Activated CD4-positive, alpha-beta T cell treated with anti-CD3 and anti-CD28 coated beads for 36 hours (primary cell): ENCODE measurements at regions of chr5 and their contacts with region 1.

Region 1: DNA sequence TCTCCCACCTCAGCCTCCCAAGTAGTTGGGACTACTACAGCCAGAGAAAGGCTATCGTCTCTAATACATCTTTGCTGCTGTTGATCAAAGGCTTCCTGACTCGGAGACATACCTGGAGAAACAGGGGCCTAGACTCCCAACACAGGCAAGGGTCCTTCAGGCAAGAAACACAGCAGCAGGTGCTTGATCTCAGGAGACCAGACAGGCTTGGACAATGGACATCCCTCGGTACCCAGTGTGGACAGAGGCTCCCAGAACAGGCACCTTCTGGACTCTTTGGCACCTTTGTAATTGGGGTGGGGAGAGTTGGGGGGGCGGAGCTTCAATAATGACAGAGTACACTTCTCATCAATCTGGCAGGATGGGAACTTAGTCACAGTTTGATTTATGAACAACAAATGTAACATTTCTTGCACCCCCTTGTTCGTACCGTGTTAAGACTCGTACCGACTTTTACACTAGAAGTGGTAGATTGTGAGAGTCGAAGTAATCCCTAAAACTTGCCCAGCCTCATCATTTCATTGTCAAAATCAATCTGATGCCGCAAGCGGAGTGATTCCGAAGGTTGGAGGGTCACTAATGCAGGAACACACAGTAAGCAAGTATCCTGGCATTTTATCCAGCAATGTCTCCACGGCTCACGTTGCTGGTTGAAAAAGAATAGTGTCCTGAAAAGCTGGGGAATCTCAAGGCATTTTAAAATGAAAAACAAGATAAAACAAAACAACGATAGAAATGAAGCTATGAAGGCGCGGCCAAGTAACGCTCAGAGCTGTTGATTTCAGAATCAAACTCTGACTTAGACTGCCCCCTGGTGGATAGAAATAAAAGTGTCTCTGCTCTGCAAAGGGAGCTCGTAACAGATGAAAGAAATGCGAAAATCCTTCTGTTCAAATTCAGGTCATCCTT is 46.4 kb upstream of the STK32A start:
- DNase-seq: peak; percentile 56
- ATAC-seq: peak; percentile 73
- H3K4me3 Mint-ChIP-seq: no peak overlapping the region
- H3K27ac Mint-ChIP-seq: no peak overlapping the region
- H3K4me1 Mint-ChIP-seq: peaks cover 2% of the 10 kb centered on the region
- H3K27me3 Mint-ChIP-seq: peaks cover 8% of the 10 kb centered on the region

Region 2: DNA sequence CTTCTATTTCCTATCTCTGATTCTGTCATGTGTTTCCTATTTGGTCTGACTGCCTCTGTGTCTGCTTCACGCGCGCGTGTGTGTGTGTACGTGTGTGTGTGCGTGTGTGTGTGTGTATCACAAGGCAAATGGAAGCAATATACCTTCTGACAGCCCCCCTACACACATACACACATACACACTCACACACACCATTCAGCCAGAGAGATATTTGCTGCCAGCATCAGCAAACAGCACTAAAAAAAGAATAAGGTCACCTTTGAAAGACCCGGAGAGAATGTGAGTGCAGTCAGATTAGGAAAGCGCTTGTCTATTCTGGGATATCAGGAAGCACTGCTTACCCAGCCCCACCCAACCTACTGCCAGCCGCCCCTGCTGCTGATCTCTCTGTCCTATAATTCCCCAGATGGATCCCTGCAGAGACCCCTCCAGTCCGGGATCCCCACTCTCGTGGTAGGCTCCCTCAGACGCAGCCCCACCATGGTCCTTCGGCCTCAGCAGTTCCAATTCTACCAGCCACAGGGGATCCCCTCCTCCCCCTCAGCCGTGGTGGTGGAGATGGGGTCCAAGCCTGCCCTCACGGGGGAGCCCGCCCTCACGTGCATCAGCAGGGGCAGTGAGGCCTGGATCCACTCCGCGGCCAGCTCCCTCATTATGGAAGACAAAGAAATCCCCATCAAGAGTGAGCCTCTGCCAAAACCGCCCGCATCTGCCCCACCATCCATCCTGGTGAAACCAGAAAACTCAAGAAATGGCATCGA is 1128.8 kb before region 1 on chr5:
- CTCF ChIA-PET with region 1: no interaction called
- POLR2A ChIA-PET with region 1: no interaction called
- intact Hi-C with region 1: no loop called
- DNase-seq: no peak
- ATAC-seq: no peak
- H3K4me3 Mint-ChIP-seq: no peak overlapping the region
- H3K27ac Mint-ChIP-seq: no peak overlapping the region
- H3K4me1 Mint-ChIP-seq: no peaks in the 10 kb centered on the region
- H3K27me3 Mint-ChIP-seq: peaks cover 5% of the 10 kb centered on the region

Region 3: DNA sequence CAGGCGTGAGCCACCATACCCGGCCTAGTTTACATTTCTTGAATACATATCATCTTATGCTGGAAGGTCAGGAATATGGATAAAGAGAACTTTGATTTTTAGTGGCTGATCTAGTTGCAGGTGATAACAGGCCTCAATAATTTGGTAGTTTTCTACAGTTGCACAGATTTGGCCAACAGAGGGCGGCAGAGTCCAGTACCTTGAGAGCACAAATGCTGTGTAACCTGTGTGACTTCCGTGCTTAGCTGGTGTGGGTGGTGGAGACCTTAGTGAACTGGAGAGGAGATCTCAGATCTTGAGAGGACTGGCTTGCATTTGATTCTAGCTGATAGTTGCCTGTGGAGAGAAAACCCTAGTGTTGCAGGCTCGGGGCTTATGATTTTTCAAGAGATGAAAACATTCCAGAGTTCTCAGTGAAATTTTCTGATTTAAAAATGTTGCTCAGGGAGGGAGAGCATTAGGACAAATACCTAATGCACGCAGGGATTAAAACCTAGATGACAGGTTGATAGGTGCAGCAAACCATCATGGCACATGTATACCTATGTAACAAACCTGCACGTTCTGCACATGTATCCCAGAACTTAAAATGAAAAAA is 655.1 kb before region 1 on chr5:
- CTCF ChIA-PET with region 1: interaction called, 61 read pairs
- POLR2A ChIA-PET with region 1: no interaction called
- intact Hi-C with region 1: loop called in 1 of 2 experiments (anchors 1 kb)
- DNase-seq: peak; percentile 88
- ATAC-seq: peak; percentile 98
- H3K4me3 Mint-ChIP-seq: no peak overlapping the region
- H3K27ac Mint-ChIP-seq: no peak overlapping the region
- H3K4me1 Mint-ChIP-seq: peaks cover 3% of the 10 kb centered on the region
- H3K27me3 Mint-ChIP-seq: no peaks in the 10 kb centered on the region

Region 4: GRCh38 chr5:146541958-146542849 is 646.2 kb before region 1 on chr5:
- CTCF ChIA-PET with region 1: interaction called, 25 read pairs
- POLR2A ChIA-PET with region 1: no interaction called
- intact Hi-C with region 1: loop called (anchors 1 to 2 kb)
- DNase-seq: peak; percentile 85
- ATAC-seq: peak; percentile 93
- H3K4me3 Mint-ChIP-seq: no peak overlapping the region
- H3K27ac Mint-ChIP-seq: no peak overlapping the region
- H3K4me1 Mint-ChIP-seq: no peaks in the 10 kb centered on the region
- H3K27me3 Mint-ChIP-seq: no peaks in the 10 kb centered on the region

Region 5: GRCh38 chr5:146662229-146662628 is 526.2 kb before region 1 on chr5:
- CTCF ChIA-PET with region 1: no interaction called
- POLR2A ChIA-PET with region 1: no interaction called
- intact Hi-C with region 1: loop called in 1 of 2 experiments (anchors 2 kb)
- DNase-seq: peak; percentile 28
- ATAC-seq: no peak
- H3K4me3 Mint-ChIP-seq: no peak overlapping the region
- H3K27ac Mint-ChIP-seq: no peak overlapping the region
- H3K4me1 Mint-ChIP-seq: peaks cover 10% of the 10 kb centered on the region
- H3K27me3 Mint-ChIP-seq: no peaks in the 10 kb centered on the region

Region 6: GRCh38 chr5:147098233-147098790 is 90.1 kb before region 1 on chr5:
- CTCF ChIA-PET with region 1: interaction called, 33 read pairs
- POLR2A ChIA-PET with region 1: no interaction called
- intact Hi-C with region 1: loop called (anchors 1 to 2 kb)
- DNase-seq: peak; percentile 37
- ATAC-seq: no peak
- H3K4me3 Mint-ChIP-seq: no peak overlapping the region
- H3K27ac Mint-ChIP-seq: no peak overlapping the region
- H3K4me1 Mint-ChIP-seq: no peaks in the 10 kb centered on the region
- H3K27me3 Mint-ChIP-seq: peaks cover 2% of the 10 kb centered on the region

Region 7: GRCh38 chr5:147200001-147200400 is 11.5 kb after region 1 on chr5:
- CTCF ChIA-PET with region 1: interaction called, 10 read pairs
- POLR2A ChIA-PET with region 1: no interaction called
- intact Hi-C with region 1: no loop called
- DNase-seq: no peak
- ATAC-seq: no peak
- H3K4me3 Mint-ChIP-seq: no peak overlapping the region
- H3K27ac Mint-ChIP-seq: no peak overlapping the region
- H3K4me1 Mint-ChIP-seq: no peaks in the 10 kb centered on the region
- H3K27me3 Mint-ChIP-seq: peaks cover 5% of the 10 kb centered on the region